ENCODE measurements at regions of chr9 and their contacts with region 1.

Region 1: DNA sequence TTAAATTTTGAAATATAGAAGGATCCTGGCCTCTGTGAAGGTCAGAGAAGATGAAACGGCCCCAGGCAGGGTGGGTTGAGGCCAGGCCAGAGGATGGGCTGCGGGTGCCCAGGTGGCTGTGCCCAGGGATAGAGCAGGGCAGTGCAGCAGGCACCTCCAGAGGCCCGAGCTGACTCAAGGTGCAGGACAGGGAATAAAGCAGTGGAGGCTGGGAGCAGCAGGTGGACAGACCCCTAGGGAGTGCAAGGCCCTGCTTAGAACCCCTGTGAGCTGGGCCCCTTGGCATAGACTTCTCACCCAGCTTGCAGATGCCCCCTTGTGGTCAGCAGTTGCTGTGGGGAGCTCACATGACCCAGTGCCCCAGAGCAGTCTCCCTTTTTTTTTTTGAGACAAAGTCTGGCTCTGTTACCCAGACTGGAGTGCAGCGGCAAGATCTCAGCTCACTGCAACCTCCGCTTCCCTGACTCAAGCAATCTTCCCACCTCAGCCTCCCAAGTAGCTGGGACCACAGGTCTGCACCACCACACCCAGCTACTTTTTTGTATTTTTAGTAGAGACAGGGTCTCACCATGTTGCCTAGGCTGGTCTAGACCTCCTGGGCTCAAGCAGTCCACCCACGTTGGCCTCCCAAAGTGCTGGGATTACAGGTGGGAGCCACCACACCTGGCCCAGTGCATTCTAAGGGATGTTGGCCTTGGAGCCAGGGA is 118.8 kb downstream of the WNK2 start:
- DNase-seq: peak; percentile 43 to 55 (median 54)
- ATAC-seq: peak; percentile 73
- H3K4me3 ChIP-seq: no peak overlapping the region
- H3K27ac ChIP-seq: no peak overlapping the region
- H3K4me1 ChIP-seq: peaks cover 0 to 24% of the 10 kb centered on the region in 2 experiments; a peak in 1 of 5 replicates
- H3K27me3 ChIP-seq: peaks cover 42 to 88% of the 10 kb centered on the region in 2 experiments
- CTCF ChIP-seq: peak; percentile 45 to 56 (median 49); a peak in 5 of 6 replicates
- EP300 ChIP-seq: no peak
- POLR2A ChIP-seq: no peak
- RAD21 ChIP-seq: peak in 1 of 2 experiments; percentile 54; a peak in 2 of 4 replicates

Region 2: DNA sequence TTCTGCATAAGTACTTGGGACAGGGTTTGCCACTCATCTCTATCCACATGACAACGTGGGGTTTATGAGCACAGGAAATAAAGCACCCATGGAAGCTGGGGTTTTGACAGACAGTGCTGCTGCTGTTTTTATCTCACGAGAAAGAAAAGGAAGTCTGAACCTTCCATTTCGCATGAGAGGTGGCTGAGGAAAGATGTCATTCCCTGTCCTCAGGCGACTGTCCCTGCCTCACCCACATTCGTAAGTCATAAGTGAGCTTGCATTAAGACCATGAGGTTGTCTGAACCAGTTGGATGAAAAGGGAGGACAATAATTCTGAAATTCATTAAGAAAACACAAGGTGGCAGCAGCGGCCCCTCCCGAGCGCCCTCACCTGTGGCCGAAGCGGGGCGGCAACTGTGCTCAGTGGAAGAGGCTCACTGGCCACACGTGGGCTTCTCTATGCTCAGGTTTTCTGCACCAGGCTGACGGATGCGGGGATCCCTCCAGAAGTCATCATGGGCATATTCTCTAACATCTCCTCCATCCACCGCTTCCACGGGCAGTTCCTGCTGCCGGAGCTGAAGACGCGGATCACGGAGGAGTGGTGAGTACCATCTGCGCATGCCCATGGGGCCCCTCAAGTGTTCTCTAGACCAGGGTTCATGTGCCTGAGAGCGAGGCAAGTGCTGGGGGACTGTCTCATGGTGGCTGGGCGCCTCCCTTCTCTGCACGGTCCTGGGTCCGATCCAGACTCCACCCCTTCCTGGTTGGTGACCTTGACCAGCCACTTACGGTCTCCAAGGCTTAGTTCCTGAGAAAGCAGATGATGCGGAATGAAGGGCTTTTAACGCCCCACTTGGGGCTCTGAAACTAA is 298.9 kb before region 1 on chr9:
- CTCF ChIA-PET with region 1: no interaction called
- POLR2A ChIA-PET with region 1: no interaction called
- in situ Hi-C with region 1: loop called (anchors 25 kb)
- intact Hi-C with region 1: loop called (anchors 2 kb)
- DNase-seq: peak; percentile 70 to 78 (median 76)
- ATAC-seq: peak; percentile 97
- H3K4me3 ChIP-seq: peak overlapping the region; percentile 33
- H3K27ac ChIP-seq: no peak overlapping the region
- H3K4me1 ChIP-seq: peaks cover 9 to 13% of the 10 kb centered on the region in 2 experiments; a peak in 4 of 5 replicates
- H3K27me3 ChIP-seq: peaks cover 0 to 24% of the 10 kb centered on the region in 2 experiments; a peak in 2 of 5 replicates
- CTCF ChIP-seq: peak; percentile 91 to 98 (median 94)
- EP300 ChIP-seq: no peak
- POLR2A ChIP-seq: no peak
- RAD21 ChIP-seq: peak; percentile 68 to 88

Region 3: GRCh38 chr9:93159601-93160471 is 142.9 kb before region 1 on chr9:
- CTCF ChIA-PET with region 1: interaction called, 12 read pairs
- POLR2A ChIA-PET with region 1: no interaction called
- in situ Hi-C with region 1: loop called (anchors 5 kb)
- intact Hi-C with region 1: loop called (anchors 1 kb)
- DNase-seq: peak; percentile 90 to 96 (median 94)
- ATAC-seq: peak; percentile 100
- H3K4me3 ChIP-seq: no peak overlapping the region
- H3K27ac ChIP-seq: no peak overlapping the region
- H3K4me1 ChIP-seq: peaks cover 0 to 9% of the 10 kb centered on the region in 2 experiments; a peak in 3 of 5 replicates
- H3K27me3 ChIP-seq: peaks cover 16 to 38% of the 10 kb centered on the region in 2 experiments
- CTCF ChIP-seq: peak; percentile 95 to 98 (median 97)
- EP300 ChIP-seq: no peak
- POLR2A ChIP-seq: no peak
- RAD21 ChIP-seq: peak; percentile 96

Region 4: DNA sequence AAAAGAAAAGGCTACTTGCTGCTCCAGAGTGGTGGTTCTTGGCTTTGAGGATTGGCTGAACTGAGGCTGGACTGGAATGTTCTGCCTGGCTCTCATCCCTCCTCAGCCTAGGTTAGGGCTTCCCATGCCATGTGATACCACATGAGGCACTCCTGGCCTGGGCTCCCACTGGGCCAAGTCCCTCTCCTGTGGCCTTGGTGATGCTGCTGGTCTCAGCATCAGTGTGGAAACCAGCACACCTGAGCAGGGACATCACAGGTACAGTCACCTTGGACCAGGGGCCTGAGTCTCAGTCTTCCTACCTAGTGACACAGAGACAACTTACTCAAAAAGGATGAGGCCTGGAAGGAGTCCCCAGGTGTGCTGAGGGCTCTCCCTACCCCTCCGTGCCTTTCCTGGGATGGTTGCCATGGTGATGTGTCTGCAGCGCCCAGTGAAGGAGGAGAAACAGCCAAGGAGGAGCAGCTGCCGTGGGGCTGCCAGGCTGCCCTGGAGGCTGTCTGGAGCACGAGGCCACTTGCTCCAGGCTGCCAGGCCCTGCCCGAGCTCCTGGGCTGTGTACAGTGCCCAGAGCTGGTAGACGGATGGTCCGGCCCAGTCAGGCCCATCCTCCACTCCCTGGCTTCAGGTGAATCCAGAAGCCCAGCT is 47.8 kb before region 1 on chr9:
- CTCF ChIA-PET with region 1: no interaction called
- POLR2A ChIA-PET with region 1: no interaction called
- in situ Hi-C with region 1: no loop called
- intact Hi-C with region 1: loop called (anchors 5 kb)
- DNase-seq: no peak
- ATAC-seq: no peak
- H3K4me3 ChIP-seq: no peak overlapping the region
- H3K27ac ChIP-seq: no peak overlapping the region
- H3K4me1 ChIP-seq: peaks cover 0 to 3% of the 10 kb centered on the region in 2 experiments; a peak in 2 of 5 replicates
- H3K27me3 ChIP-seq: peaks cover 14 to 67% of the 10 kb centered on the region in 2 experiments; a peak in 4 of 5 replicates
- CTCF ChIP-seq: no peak
- EP300 ChIP-seq: no peak
- POLR2A ChIP-seq: no peak
- RAD21 ChIP-seq: no peak

Region 5: GRCh38 chr9:93438003-93438402 is 135.3 kb after region 1 on chr9:
- CTCF ChIA-PET with region 1: no interaction called
- POLR2A ChIA-PET with region 1: no interaction called
- in situ Hi-C with region 1: no loop called
- intact Hi-C with region 1: no loop called
- DNase-seq: no peak
- ATAC-seq: no peak
- H3K4me3 ChIP-seq: no peak overlapping the region
- H3K27ac ChIP-seq: no peak overlapping the region
- H3K4me1 ChIP-seq: no peaks in the 10 kb centered on the region
- H3K27me3 ChIP-seq: peaks cover 7 to 13% of the 10 kb centered on the region in 2 experiments; a peak in 3 of 5 replicates
- CTCF ChIP-seq: no peak
- EP300 ChIP-seq: no peak
- POLR2A ChIP-seq: no peak
- RAD21 ChIP-seq: no peak

Region 6: GRCh38 chr9:93517331-93517730 is 214.6 kb after region 1 on chr9:
- CTCF ChIA-PET with region 1: no interaction called
- POLR2A ChIA-PET with region 1: no interaction called
- in situ Hi-C with region 1: no loop called
- intact Hi-C with region 1: no loop called
- DNase-seq: no peak
- ATAC-seq: no peak
- H3K4me3 ChIP-seq: no peak overlapping the region
- H3K27ac ChIP-seq: no peak overlapping the region
- H3K4me1 ChIP-seq: no peaks in the 10 kb centered on the region
- H3K27me3 ChIP-seq: no peaks in the 10 kb centered on the region
- CTCF ChIP-seq: no peak
- EP300 ChIP-seq: no peak
- POLR2A ChIP-seq: no peak
- RAD21 ChIP-seq: no peak

Measured in K562 (cell line).